ENCODE measurements at regions of chr1 and their contacts with region 1.

Region 1: DNA sequence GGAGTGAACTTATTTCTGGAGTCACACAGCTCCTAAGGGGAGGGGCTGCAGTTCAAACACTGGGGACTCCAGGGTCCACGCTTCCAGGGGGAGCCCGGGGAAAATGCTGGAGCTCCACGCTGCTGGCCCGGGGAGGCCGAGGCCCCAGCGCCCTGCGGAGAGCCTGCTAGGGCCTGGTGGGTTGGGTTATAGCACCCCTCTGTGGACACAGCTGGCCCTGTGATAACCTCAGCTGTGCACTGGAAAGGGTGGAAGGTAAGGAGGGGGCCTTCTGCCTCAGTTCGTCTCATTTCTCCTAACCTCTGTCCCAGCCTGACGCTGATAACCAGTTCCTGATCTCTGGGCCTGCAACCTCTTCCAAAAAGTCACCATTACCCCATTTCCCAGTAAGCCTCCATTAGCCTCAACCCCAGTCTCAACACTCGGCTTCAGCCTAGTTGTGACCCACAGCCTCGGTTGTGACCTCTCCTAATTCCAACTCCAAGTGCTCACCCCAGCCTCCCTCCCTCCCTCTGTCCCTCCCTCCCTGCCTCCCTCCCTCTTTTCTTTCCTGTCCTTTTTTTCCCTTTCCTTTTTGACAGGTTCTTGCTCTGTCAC is 7.1 kb downstream of the NBL1 start:
- DNase-seq: peak; percentile 40
- H3K4me3 ChIP-seq: no peak overlapping the region
- H3K27ac ChIP-seq: peak overlapping the region; percentile 85 to 99
- H3K4me1 ChIP-seq: peaks cover 24% of the 10 kb centered on the region
- H3K27me3 ChIP-seq: no peaks in the 10 kb centered on the region
- CTCF ChIP-seq: peak in 3 of 4 experiments; percentile 49 to 69 (median 69)
- POLR2A ChIP-seq: no peak

Region 2: GRCh38 chr1:19347533-19348172 is 303.6 kb before region 1 on chr1:
- intact Hi-C with region 1: loop called (anchors 2 kb)
- DNase-seq: no peak
- H3K4me3 ChIP-seq: no peak overlapping the region
- H3K27ac ChIP-seq: peak overlapping the region; percentile 53 to 66
- H3K4me1 ChIP-seq: peaks cover 23% of the 10 kb centered on the region
- H3K27me3 ChIP-seq: no peaks in the 10 kb centered on the region
- CTCF ChIP-seq: no peak
- POLR2A ChIP-seq: no peak

Measured in prostate gland (tissue), 2 donors.